ENCODE measurements at regions of chr7 and their contacts with region 1.

Region 1: DNA sequence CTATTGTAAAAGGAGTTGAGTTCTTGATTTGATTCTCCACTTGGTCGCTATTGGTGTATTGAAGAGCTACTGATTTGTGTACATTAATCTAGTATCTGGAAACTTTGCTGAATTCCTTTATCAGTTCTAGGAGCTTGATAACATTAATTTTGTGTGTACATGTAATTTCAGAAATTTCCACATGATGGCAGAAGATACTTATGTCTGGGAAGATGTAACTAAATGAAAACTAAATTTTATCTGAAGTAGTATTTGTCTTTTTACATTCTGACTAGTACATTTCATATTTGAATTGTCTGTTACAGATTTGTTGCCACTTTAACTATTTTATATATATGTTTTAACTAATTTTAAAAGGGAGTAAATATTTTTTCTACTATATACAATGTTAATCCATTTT is 27.6 kb downstream of the SDHAF3 start:
- DNase-seq: peak; percentile 35
- H3K4me3 ChIP-seq: no peak overlapping the region
- CTCF ChIP-seq: peak; percentile 9

Region 2: GRCh38 chr7:96538632-96539031 is 606.4 kb before region 1 on chr7:
- in situ Hi-C with region 1: no loop called
- DNase-seq: no peak
- H3K4me3 ChIP-seq: no peak overlapping the region
- CTCF ChIP-seq: no peak

Region 3: DNA sequence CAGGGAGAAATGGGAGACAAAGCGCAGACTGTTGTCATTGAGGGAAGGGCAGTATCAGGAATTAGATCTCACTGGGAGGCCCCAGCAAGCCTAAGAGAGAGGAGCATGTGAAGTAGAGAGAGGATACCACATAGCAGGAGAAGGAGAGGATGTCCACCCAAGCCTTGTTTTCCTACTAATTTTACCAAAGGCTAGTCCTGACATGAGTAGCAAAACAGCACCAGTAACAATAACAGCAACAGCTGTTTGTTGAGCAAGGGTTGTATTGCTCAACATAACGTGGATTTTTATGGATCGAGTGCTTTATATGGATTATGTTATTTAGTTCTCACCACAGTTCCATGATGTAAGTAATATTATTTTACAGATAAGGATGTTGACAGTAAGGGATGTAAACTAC is 274.9 kb before region 1 on chr7:
- in situ Hi-C with region 1: no loop called
- DNase-seq: no peak
- H3K4me3 ChIP-seq: no peak overlapping the region
- CTCF ChIP-seq: no peak

Region 4: DNA sequence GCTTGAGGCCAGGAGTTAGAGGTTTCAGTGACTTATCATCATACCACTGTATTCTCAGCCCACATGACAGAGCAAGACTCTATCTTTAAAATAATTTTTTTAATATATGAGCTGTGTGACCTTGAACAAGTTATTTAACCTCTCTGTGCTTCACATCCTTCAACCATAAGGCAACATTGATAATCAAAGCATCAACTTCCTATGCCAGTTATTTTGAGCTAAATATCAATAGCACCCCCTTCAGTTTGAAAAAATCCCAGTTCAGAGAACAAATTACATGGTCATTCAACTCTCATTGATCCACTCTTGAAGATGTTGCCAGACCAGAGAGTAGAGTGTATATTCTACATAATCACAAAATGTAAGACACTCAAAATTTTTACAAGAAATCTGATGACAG is 674.1 kb after region 1 on chr7:
- in situ Hi-C with region 1: no loop called
- DNase-seq: no peak
- H3K4me3 ChIP-seq: no peak overlapping the region
- CTCF ChIP-seq: no peak

Region 5: GRCh38 chr7:97872025-97872669 is 727.1 kb after region 1 on chr7 and contains the start of gene ASNS:
- in situ Hi-C with region 1: loop called (anchors 25 kb)
- DNase-seq: peak; percentile 68
- H3K4me3 ChIP-seq: peak within 1 kb of the TSS; percentile 78
- CTCF ChIP-seq: no peak

Measured in astrocyte of the cerebellum (primary cell).